Activated CD8-positive, alpha-beta T cell treated with anti-CD3 and anti-CD28 coated beads, Interleukin-2, amount 10 ng/mL, durations not matched to agents 7 days and 5 days (primary cell): ENCODE measurements at regions of chr19 and their contacts with region 1.

Region 1: GRCh38 chr19:46840136-46840942 is 10.3 kb downstream of the AP2S1 start:
- DNase-seq: peak; percentile 64
- ATAC-seq: peak; percentile 73
- H3K4me3 Mint-ChIP-seq: no peak overlapping the region
- H3K27ac Mint-ChIP-seq: no peak overlapping the region
- H3K4me1 Mint-ChIP-seq: no peaks in the 10 kb centered on the region
- H3K27me3 Mint-ChIP-seq: no peaks in the 10 kb centered on the region

Region 2: DNA sequence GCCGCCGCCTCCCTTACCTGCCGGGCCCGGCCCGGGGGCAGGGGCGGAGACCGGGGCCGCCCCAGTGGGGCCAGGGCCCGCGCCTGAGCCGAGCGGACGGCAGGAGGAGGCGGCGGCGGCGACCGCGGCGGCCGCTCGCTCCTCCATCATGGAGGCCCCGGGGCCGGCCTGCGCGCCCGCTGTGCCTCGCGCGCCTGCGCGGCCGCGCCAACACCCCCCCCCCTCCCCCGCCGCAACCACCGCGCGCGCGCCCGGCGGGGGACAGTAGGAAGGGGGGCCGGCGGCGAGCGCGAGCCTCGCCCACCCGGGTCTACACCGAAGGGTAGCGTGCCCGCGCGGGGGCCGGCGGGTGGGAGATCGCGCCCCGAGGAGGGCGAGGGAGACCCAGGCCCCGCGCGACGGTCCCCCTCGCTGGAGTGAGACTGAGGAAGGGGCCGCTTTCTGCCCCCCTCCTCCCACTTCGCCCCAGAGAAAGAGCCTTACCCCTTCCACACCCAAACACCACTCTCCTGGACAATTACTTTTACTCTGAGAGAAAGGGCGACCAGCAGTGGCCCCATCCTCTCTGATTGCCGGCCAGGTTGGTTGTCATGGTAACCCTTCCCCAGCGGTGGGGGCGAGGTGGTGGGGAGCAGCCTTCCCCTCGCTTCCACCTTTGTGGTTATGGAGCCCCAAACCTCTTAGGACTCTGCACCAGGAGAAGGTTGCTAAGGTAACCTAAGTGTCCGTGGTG is 93.9 kb before region 1 on chr19 and contains the start of gene STRN4:
- CTCF ChIA-PET with region 1: interaction called, 122 read pairs
- POLR2A ChIA-PET with region 1: no interaction called
- DNase-seq: peak; percentile 65
- ATAC-seq: peak; percentile 56
- H3K4me3 Mint-ChIP-seq: peak within 1 kb of the TSS; percentile 94
- H3K27ac Mint-ChIP-seq: peak within 1 kb of the TSS; percentile 86
- H3K4me1 Mint-ChIP-seq: peaks cover 52% of the 10 kb centered on the region
- H3K27me3 Mint-ChIP-seq: no peaks in the 10 kb centered on the region
- total RNA-seq, gene STRN4: 79.6 to 90.2 TPM

Region 3: GRCh38 chr19:46766569-46767317 is 73.6 kb before region 1 on chr19:
- CTCF ChIA-PET with region 1: interaction called, 122 read pairs
- POLR2A ChIA-PET with region 1: no interaction called
- DNase-seq: peak; percentile 75
- ATAC-seq: peak; percentile 80
- H3K4me3 Mint-ChIP-seq: no peak overlapping the region
- H3K27ac Mint-ChIP-seq: peak overlapping the region; percentile 7
- H3K4me1 Mint-ChIP-seq: peaks cover 5% of the 10 kb centered on the region
- H3K27me3 Mint-ChIP-seq: no peaks in the 10 kb centered on the region

Region 4: GRCh38 chr19:46803555-46803954 is 36.8 kb before region 1 on chr19:
- CTCF ChIA-PET with region 1: interaction called, 10 read pairs
- POLR2A ChIA-PET with region 1: no interaction called
- DNase-seq: no peak
- ATAC-seq: no peak
- H3K4me3 Mint-ChIP-seq: no peak overlapping the region
- H3K27ac Mint-ChIP-seq: no peak overlapping the region
- H3K4me1 Mint-ChIP-seq: no peaks in the 10 kb centered on the region
- H3K27me3 Mint-ChIP-seq: peaks cover under 1% of the 10 kb centered on the region

Region 5: GRCh38 chr19:46828484-46828883 is 11.9 kb before region 1 on chr19:
- CTCF ChIA-PET with region 1: interaction called, 10 read pairs
- POLR2A ChIA-PET with region 1: interaction called, 5 read pairs
- DNase-seq: peak; percentile 33
- ATAC-seq: no peak
- H3K4me3 Mint-ChIP-seq: no peak overlapping the region
- H3K27ac Mint-ChIP-seq: no peak overlapping the region
- H3K4me1 Mint-ChIP-seq: peaks cover 16% of the 10 kb centered on the region
- H3K27me3 Mint-ChIP-seq: no peaks in the 10 kb centered on the region